ENCODE measurements at regions of chr7 and their contacts with region 1.

Region 1: GRCh38 chr7:77759294-77759889 is 38.8 kb downstream of the TMEM60 start:
- DNase-seq: peak; percentile 68
- H3K4me3 ChIP-seq: no peak overlapping the region
- H3K27ac ChIP-seq: no peak overlapping the region
- H3K4me1 ChIP-seq: no peaks in the 10 kb centered on the region
- H3K27me3 ChIP-seq: no peaks in the 10 kb centered on the region
- CTCF ChIP-seq: peak; percentile 88

Region 2: DNA sequence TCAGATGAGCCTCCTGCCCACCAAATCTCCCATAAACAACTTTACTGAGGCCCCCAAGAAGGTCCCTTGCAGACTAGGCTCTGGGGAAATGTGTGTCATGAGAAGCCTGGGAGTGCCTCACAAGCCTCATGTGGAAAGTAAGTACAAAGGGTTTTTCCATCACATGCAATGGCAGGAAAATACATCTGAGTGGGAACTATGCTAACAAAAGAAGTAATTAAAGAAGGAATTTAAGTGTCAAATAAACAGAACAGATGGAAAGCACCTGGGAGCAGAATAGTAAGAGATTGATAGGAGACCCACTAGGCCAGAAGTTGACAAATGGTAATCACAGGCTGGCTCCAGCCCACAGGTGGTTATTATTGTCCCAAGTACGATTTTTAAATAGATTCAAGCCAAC is 363.8 kb before region 1 on chr7:
- CTCF ChIA-PET with region 1: no interaction called
- POLR2A ChIA-PET with region 1: no interaction called
- intact Hi-C with region 1: no loop called
- DNase-seq: no peak
- H3K4me3 ChIP-seq: no peak overlapping the region
- H3K27ac ChIP-seq: no peak overlapping the region
- H3K4me1 ChIP-seq: no peaks in the 10 kb centered on the region
- H3K27me3 ChIP-seq: no peaks in the 10 kb centered on the region
- CTCF ChIP-seq: no peak

Region 3: DNA sequence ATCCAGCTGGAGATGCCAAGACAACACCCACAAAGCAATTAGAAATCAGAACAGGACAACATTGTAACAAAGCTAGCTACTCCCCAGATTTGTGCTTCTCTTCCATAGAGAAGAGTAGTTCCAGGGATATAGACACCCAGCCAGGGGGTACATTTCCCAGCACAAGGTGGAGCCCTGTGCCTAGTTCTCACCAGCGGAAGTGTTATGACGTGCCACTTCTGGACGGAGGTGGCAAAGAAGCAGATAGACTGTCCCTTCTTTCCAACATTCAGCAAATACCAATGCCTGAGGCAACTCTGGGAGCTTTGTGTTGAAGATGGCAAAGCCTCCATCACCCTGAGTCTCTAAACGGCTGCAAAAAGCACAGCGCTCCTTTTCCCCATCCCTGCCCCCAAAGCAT is 319.8 kb before region 1 on chr7:
- CTCF ChIA-PET with region 1: no interaction called
- POLR2A ChIA-PET with region 1: no interaction called
- intact Hi-C with region 1: loop called (anchors 10 kb)
- DNase-seq: peak; percentile 42
- H3K4me3 ChIP-seq: no peak overlapping the region
- H3K27ac ChIP-seq: no peak overlapping the region
- H3K4me1 ChIP-seq: no peaks in the 10 kb centered on the region
- H3K27me3 ChIP-seq: no peaks in the 10 kb centered on the region
- CTCF ChIP-seq: peak; percentile 42

Region 4: GRCh38 chr7:77561352-77561751 is 198.0 kb before region 1 on chr7:
- CTCF ChIA-PET with region 1: no interaction called
- POLR2A ChIA-PET with region 1: no interaction called
- intact Hi-C with region 1: no loop called
- DNase-seq: no peak
- H3K4me3 ChIP-seq: no peak overlapping the region
- H3K27ac ChIP-seq: no peak overlapping the region
- H3K4me1 ChIP-seq: peaks cover 7% of the 10 kb centered on the region
- H3K27me3 ChIP-seq: no peaks in the 10 kb centered on the region
- CTCF ChIP-seq: no peak

Region 5: DNA sequence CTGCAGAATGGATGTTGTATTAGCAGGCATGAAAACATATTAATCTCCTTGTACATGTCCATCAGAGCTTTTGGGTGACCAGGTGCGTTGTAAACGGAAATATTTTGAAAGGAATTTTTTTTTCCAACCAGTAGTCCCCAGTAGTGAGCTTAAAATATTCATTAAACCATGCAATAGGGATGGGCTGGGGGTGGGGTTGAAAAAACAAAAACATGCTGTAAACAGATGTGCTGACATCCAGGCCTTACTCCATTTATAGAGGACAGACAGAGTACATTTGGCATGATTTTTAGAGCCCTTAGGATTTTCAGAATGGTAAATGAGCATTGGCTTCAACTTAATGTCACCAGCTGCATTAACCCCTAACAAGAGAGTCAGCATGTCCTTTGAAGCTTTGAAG is 172.1 kb before region 1 on chr7:
- CTCF ChIA-PET with region 1: no interaction called
- POLR2A ChIA-PET with region 1: no interaction called
- intact Hi-C with region 1: no loop called
- DNase-seq: no peak
- H3K4me3 ChIP-seq: no peak overlapping the region
- H3K27ac ChIP-seq: no peak overlapping the region
- H3K4me1 ChIP-seq: no peaks in the 10 kb centered on the region
- H3K27me3 ChIP-seq: no peaks in the 10 kb centered on the region
- CTCF ChIP-seq: no peak

Region 6: GRCh38 chr7:77657427-77658224 is 101.8 kb before region 1 on chr7:
- CTCF ChIA-PET with region 1: no interaction called
- POLR2A ChIA-PET with region 1: no interaction called
- intact Hi-C with region 1: loop called (anchors 1 kb)
- DNase-seq: peak; percentile 77
- H3K4me3 ChIP-seq: no peak overlapping the region
- H3K27ac ChIP-seq: no peak overlapping the region
- H3K4me1 ChIP-seq: no peaks in the 10 kb centered on the region
- H3K27me3 ChIP-seq: no peaks in the 10 kb centered on the region
- CTCF ChIP-seq: peak; percentile 65

Region 7: GRCh38 chr7:77696198-77697028 is 63.0 kb before region 1 on chr7 and contains the start of gene RSBN1L:
- CTCF ChIA-PET with region 1: no interaction called
- POLR2A ChIA-PET with region 1: no interaction called
- intact Hi-C with region 1: loop called (anchors 5 kb)
- DNase-seq: peak; percentile 98
- H3K4me3 ChIP-seq: peak within 1 kb of the TSS; percentile 97
- H3K27ac ChIP-seq: peak within 1 kb of the TSS; percentile 94
- H3K4me1 ChIP-seq: peaks cover 15% of the 10 kb centered on the region
- H3K27me3 ChIP-seq: no peaks in the 10 kb centered on the region
- CTCF ChIP-seq: peak; percentile 50
- total RNA-seq, gene RSBN1L: 22.4 and 23.2 TPM in 2 replicates

Region 8: DNA sequence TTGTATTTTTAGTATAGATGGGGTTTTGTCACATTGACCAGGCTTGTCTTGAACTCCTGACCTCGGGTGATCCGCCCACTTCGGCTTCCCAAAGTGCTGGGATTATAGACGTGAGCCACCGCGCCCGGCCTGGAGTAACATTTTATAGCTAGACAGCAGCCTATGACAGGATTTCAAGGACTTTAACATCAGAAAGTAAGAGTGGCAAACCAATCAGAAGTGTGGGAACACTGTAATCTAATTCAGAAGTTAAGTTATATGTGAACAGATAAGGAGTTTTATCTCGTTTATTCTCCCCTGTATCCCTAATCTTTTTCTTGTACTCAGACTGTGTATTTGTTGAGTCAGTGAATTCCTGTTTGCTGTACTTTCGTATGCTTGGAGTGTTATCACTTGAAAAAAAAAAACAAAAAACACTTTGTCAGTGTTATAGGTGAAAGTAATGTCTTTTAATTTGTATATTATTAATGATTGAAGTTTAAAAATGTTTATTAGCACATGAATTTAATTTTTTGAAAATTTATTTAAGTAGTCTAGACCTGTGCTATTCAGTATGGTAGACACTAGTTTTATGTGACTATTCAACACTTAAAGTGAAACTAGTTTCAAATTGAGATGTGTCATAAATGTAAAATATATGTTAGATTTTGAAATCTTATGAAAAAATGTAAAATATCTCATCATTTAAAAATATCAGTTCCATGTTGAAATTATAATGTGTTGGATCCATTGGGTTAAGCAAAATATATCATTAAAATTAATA is 24.6 kb before region 1 on chr7:
- CTCF ChIA-PET with region 1: no interaction called
- POLR2A ChIA-PET with region 1: no interaction called
- intact Hi-C with region 1: no loop called
- DNase-seq: no peak
- H3K4me3 ChIP-seq: no peak overlapping the region
- H3K27ac ChIP-seq: no peak overlapping the region
- H3K4me1 ChIP-seq: peaks cover 8% of the 10 kb centered on the region
- H3K27me3 ChIP-seq: no peaks in the 10 kb centered on the region
- CTCF ChIP-seq: no peak

Measured in A673 (cell line).